ENCODE measurements at regions of chr2 and their contacts with region 1.

Region 1: DNA sequence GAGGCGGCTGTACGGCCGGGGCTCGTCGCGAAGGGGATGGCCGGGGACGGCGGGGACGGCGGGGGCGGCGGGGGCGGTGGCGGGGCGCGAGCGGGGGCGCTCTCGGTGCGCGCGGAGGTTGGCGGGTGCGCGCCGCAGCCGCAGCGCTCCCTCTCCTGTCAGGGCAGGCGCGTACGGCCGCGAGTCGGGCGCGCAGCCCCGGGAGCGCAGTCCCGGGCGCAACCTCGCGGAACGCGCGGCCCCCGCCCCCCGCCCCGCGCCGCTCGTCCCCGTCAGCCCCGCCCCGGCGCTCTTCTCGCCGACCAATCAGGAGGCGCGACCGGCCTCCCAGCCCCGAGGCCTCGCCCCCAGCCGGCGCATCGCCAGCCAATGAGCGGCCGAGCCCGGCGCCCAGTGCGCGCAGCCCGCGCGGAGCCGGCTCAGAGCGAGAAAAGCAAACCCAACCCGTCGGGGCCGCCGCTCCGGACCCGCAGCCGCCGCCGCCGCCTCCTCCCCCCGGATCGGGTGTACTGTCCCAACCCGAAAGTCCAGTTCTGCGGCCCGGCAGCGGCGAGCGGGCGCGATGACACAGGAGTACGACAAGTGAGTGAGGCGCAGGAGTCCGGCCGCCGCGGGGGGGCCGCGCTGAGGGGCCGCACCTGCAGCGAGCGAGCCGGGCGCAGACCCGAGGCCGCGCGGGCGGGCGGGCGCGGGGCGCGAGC is at the start of gene GRHL1:
- DNase-seq: peak; percentile 95 to 100 (median 100)
- ATAC-seq: peak; percentile 98
- H3K4me3 ChIP-seq: peak within 1 kb of the TSS; percentile 79
- H3K27ac ChIP-seq: peak within 1 kb of the TSS; percentile 67
- H3K4me1 ChIP-seq: peaks cover 10 to 16% of the 10 kb centered on the region in 2 experiments; a peak in 3 of 5 replicates
- H3K27me3 ChIP-seq: no peaks in the 10 kb centered on the region
- CTCF ChIP-seq: 0 out of 6 replicates have a peak, but pooled peaks of 1 of the 3 experiments have one; percentile 1
- EP300 ChIP-seq: no peak
- POLR2A ChIP-seq: peak; percentile 52
- RAD21 ChIP-seq: no peak
- polyA plus RNA-seq, gene GRHL1: 1.7 to 1.9 TPM

Region 2: DNA sequence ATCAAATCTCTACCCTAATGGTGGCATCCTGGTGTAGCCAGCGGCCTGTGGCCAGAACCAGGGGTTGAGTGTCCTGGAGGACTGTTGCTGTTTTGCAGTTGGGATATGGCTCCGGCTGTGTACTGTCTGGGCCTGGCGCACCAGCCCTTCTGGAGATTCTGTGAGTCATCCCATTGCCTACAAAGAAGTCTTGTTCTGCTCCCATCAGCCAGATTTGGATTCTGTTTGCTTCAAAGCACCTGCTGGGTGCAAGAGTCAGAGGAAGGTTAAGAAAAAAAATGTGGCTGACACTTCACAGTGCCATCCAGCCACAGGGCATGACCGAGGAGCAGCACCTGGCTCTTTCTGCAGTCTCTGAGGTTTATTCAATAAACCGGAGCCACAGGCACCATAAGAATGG is 785.8 kb before region 1 on chr2:
- CTCF ChIA-PET with region 1: no interaction called
- POLR2A ChIA-PET with region 1: no interaction called
- in situ Hi-C with region 1: no loop called
- intact Hi-C with region 1: loop called (anchors 5 kb)
- DNase-seq: no peak
- ATAC-seq: no peak
- H3K4me3 ChIP-seq: no peak overlapping the region
- H3K27ac ChIP-seq: no peak overlapping the region
- H3K4me1 ChIP-seq: peaks cover 8 to 21% of the 10 kb centered on the region in 2 experiments
- H3K27me3 ChIP-seq: peaks cover 4 to 30% of the 10 kb centered on the region in 2 experiments; a peak in 4 of 5 replicates
- CTCF ChIP-seq: no peak
- EP300 ChIP-seq: no peak
- POLR2A ChIP-seq: no peak
- RAD21 ChIP-seq: no peak

Region 3: DNA sequence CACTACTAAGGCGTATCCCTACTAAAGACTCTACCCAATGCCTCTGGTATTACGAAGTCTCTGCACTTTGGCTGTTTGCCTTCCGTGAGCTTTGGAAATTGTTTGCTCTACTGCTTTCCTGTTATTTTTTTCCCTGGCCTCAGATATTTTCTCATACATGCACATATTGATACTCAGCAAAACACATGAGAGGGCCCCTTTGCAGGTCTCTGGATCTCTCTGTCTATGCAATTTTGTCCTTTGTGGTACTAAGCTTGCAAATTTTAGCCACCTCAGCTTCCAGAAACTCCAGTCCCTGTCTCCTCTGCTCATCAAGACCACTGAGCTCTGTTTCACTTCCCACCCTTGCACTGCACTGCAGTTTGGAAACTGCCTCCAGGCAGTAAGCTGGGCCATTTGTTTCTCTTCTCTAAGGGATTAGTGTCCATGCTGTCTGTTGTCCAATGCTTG is 61.6 kb before region 1 on chr2:
- CTCF ChIA-PET with region 1: no interaction called
- POLR2A ChIA-PET with region 1: no interaction called
- in situ Hi-C with region 1: no loop called
- intact Hi-C with region 1: no loop called
- DNase-seq: no peak
- ATAC-seq: no peak
- H3K4me3 ChIP-seq: no peak overlapping the region
- H3K27ac ChIP-seq: no peak overlapping the region
- H3K4me1 ChIP-seq: no peaks in the 10 kb centered on the region
- H3K27me3 ChIP-seq: no peaks in the 10 kb centered on the region
- CTCF ChIP-seq: no peak
- EP300 ChIP-seq: no peak
- POLR2A ChIP-seq: no peak
- RAD21 ChIP-seq: no peak

Measured in K562 (cell line).